Psoas muscle (tissue), 8 donors: ENCODE measurements at regions of chr18 and their contacts with region 1.

Region 1: GRCh38 chr18:46148810-46149209 is 44.6 kb downstream of the HAUS1 start:
- DNase-seq: no peak
- ATAC-seq: peak in 1 of 4 donors; percentile 18
- H3K4me3 ChIP-seq: no peak overlapping the region
- H3K27ac ChIP-seq: peak overlapping the region; percentile 4
- H3K4me1 ChIP-seq: peaks cover 23% of the 10 kb centered on the region
- H3K27me3 ChIP-seq: no peaks in the 10 kb centered on the region
- CTCF ChIP-seq: peak; percentile 65

Region 2: GRCh38 chr18:46518438-46518837 is 369.6 kb after region 1 on chr18:
- intact Hi-C with region 1: loop called in 1 of 2 experiments (anchors 10 kb)
- DNase-seq: peak in 1 of 2 donors; percentile 65
- ATAC-seq: peak; percentile 93 to 97 (median 95)
- H3K4me3 ChIP-seq: no peak overlapping the region
- H3K27ac ChIP-seq: no peak overlapping the region
- H3K4me1 ChIP-seq: no peaks in the 10 kb centered on the region
- H3K27me3 ChIP-seq: no peaks in the 10 kb centered on the region
- CTCF ChIP-seq: peak; percentile 61

Region 3: DNA sequence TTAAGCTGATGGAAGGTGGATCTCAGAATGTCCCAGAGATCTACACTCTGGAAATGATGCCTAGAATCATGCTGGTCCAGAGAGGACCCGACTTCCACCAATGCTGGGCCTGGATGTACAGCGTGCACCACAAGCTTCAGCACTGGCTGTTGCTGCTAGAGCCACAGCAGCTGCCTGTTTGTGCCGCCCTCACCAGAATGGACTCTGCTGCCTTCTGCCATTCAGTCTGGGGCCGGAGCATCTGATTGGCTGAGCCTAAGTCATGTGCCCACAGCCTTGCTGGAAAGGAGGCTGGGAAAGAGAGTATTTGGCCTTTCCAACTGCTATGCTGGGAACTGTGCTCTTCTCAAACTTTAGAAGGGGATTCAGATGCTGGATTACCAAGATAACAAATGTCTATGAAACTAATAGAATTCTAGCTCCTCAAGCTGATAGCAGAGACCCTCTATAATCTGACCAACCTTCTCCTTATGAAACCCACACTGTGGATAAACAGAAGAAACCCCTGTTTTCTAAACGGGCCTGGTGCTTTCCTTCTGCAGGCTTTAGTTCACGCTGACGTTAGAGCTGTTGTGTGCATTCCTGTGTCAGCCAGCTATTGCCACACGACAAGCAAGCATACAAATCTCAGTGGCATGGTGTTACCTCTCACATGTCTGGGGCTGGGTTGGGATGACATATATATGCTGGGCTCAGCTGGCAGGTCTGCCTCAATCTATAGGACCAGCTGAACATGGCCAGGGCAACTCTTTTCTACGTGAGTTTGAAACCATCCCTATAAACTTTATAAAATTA is 512.3 kb after region 1 on chr18:
- intact Hi-C with region 1: loop called (anchors 2 to 5 kb)
- DNase-seq: no peak
- ATAC-seq: peak; percentile 59 to 84 (median 80)
- H3K4me3 ChIP-seq: no peak overlapping the region
- H3K27ac ChIP-seq: no peak overlapping the region
- H3K4me1 ChIP-seq: no peaks in the 10 kb centered on the region
- H3K27me3 ChIP-seq: no peaks in the 10 kb centered on the region
- CTCF ChIP-seq: no peak